Adrenal gland (tissue), 19 donors: ENCODE measurements at regions of chr18 and their contacts with region 1.

Region 1: GRCh38 chr18:48777026-48777743 is 173.6 kb downstream of the SMAD7 start:
- DNase-seq: peak; percentile 34 to 75 (median 53)
- H3K4me3 ChIP-seq: no peak overlapping the region
- H3K27ac ChIP-seq: peak overlapping the region in 1 of 5 donors; percentile 59
- H3K4me1 ChIP-seq: peaks cover 6 to 41% of the 10 kb centered on the region in 2 donors
- H3K27me3 ChIP-seq: no peaks in the 10 kb centered on the region
- CTCF ChIP-seq: peak; percentile 68 to 86 (median 76)
- POLR2A ChIP-seq: no peak

Region 2: DNA sequence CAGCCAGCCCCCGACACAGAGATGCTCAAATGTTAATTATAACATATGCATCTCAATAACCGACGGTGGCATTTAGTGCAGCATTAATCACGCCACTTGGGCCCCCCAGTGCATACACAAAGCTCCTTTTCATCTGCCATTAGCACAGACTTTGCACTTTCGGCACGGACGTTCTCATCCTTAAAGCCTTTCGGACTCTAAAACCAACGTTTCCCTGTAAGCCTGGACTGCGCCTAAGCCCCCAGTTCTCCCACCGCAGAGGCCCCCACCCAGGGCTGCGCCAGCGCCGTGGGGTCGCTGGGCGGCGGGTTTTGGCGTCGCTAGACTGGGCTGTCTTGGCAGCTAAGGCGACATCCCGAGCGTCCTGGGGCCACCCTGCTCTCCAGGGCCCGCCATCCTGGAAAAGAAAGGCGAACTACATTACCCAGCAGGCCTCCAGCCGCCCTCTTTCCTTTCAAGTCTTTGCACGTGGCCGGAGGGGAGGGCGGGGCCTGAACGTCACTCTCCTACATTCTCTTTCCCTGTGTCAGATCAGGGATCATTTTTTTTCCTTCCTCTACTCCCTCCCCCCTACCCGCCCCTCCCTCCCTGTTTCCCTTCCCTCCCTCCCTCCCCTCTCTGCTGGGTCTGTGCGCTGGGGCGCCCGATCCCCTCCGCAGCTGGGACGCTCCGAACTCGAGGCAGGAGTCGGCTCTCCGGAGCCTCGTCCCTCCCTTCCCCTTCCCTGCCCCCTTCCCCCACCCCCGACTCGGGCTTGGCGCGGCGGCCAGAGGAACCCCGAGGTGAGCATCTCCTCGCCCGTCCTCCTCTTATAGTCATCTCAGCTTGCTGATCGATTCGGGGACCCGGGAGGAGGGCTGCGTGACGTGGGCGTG is 238.4 kb before region 1 on chr18 and contains the start of gene CTIF:
- intact Hi-C with region 1: no loop called
- DNase-seq: peak; percentile 96 to 99 (median 98)
- H3K4me3 ChIP-seq: peak within 1 kb of the TSS; percentile 59 to 97 (median 80)
- H3K27ac ChIP-seq: peak within 1 kb of the TSS; percentile 46 to 94 (median 83)
- H3K4me1 ChIP-seq: peaks cover 5 to 46% of the 10 kb centered on the region in 2 donors
- H3K27me3 ChIP-seq: no peaks in the 10 kb centered on the region
- CTCF ChIP-seq: no peak
- POLR2A ChIP-seq: peak; percentile 37 to 80
- total RNA-seq, gene CTIF: 20.5 to 98.7 (median 46.5) TPM

Region 3: GRCh38 chr18:49021433-49022129 is 244.4 kb after region 1 on chr18:
- intact Hi-C with region 1: loop called in 1 of 2 experiments (anchors 10 kb)
- DNase-seq: peak; percentile 44 to 70 (median 66)
- H3K4me3 ChIP-seq: no peak overlapping the region
- H3K27ac ChIP-seq: no peak overlapping the region
- H3K4me1 ChIP-seq: peaks cover 0 to 2% of the 10 kb centered on the region in 2 donors
- H3K27me3 ChIP-seq: no peaks in the 10 kb centered on the region
- CTCF ChIP-seq: peak; percentile 16 to 70 (median 47)
- POLR2A ChIP-seq: no peak

Region 4: GRCh38 chr18:49041435-49042245 is 264.5 kb after region 1 on chr18:
- intact Hi-C with region 1: loop called in 1 of 2 experiments (anchors 10 kb)
- DNase-seq: peak; percentile 48 to 84 (median 56)
- H3K4me3 ChIP-seq: no peak overlapping the region
- H3K27ac ChIP-seq: no peak overlapping the region
- H3K4me1 ChIP-seq: no peaks in the 10 kb centered on the region
- H3K27me3 ChIP-seq: no peaks in the 10 kb centered on the region
- CTCF ChIP-seq: peak; percentile 38 to 64 (median 58)
- POLR2A ChIP-seq: no peak